MCF 10A (cell line): ENCODE measurements at regions of chr10 and their contacts with region 1.

Region 1: GRCh38 chr10:59808896-59809643 is 55.8 kb upstream of the MRLN start:
- DNase-seq: peak; percentile 81
- H3K4me3 Mint-ChIP-seq: no peak overlapping the region
- H3K27ac Mint-ChIP-seq: no peak overlapping the region
- H3K4me1 Mint-ChIP-seq: no peaks in the 10 kb centered on the region
- H3K27me3 Mint-ChIP-seq: no peaks in the 10 kb centered on the region
- CTCF ChIP-seq: peak; percentile 63

Region 2: DNA sequence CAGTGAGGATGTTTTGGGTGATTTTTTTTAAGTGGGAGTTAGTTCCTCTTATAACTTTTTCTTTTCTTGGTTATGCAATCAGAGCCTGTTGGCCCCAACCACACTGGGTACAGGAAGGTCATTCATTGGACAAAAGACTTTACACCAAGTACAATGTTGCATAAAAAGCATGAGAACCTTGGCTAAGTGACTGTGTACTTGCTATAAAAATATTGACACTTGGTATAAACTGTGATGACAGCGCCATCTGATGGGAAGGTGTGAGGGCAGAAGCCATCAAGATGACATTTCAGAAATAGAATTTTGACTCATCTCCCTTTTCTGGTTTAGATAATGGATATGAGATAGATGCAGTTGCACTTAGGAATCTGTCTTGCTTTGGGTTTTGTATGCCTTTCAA is 223.7 kb after region 1 on chr10:
- CTCF ChIA-PET with region 1: interaction called, 5 read pairs
- POLR2A ChIA-PET with region 1: no interaction called
- intact Hi-C with region 1: loop called (anchors 2 kb)
- DNase-seq: peak; percentile 77
- H3K4me3 Mint-ChIP-seq: no peak overlapping the region
- H3K27ac Mint-ChIP-seq: no peak overlapping the region
- H3K4me1 Mint-ChIP-seq: no peaks in the 10 kb centered on the region
- H3K27me3 Mint-ChIP-seq: no peaks in the 10 kb centered on the region
- CTCF ChIP-seq: peak; percentile 58